ENCODE measurements at regions of chr14 and their contacts with region 1.

Region 1: DNA sequence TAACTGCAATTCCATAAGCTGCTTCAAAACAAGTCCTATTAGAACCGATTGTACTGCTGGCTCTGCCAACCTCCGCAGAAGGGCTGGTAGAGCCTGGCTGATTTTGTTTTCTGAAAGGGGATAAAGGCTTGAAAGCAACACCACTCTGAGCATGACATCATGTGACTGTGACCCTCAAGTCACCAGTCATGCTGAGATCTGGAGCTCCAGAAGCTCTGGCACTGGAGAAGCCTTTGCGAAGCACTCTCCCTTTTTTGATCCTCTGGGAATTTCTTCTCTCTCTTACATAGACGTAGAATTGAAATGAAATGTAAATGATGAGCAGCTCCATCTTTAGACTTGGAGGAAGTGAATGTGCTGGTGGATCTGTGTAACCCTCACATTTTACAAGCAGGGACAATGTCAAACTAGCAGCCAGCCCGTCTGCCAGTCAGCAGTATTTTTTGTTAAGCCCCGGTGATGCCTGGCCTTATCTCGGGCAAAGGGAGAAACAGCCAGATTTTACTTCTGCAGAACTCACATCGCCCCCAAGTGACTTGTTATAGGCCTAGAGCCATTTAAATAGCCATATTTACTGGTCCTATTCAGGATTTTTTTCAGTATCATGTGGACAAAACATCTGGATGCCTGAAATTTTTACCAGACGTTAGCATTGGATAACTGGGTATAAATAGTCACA is 112.1 kb upstream of the NPAS3 start:
- DNase-seq: peak; percentile 12 to 87 (median 62)

Region 2: GRCh38 chr14:32576088-32576795 is 250.3 kb before region 1 on chr14:
- intact Hi-C with region 1: loop called (anchors 10 kb)
- DNase-seq: peak; percentile 19 to 89 (median 64)

Region 3: DNA sequence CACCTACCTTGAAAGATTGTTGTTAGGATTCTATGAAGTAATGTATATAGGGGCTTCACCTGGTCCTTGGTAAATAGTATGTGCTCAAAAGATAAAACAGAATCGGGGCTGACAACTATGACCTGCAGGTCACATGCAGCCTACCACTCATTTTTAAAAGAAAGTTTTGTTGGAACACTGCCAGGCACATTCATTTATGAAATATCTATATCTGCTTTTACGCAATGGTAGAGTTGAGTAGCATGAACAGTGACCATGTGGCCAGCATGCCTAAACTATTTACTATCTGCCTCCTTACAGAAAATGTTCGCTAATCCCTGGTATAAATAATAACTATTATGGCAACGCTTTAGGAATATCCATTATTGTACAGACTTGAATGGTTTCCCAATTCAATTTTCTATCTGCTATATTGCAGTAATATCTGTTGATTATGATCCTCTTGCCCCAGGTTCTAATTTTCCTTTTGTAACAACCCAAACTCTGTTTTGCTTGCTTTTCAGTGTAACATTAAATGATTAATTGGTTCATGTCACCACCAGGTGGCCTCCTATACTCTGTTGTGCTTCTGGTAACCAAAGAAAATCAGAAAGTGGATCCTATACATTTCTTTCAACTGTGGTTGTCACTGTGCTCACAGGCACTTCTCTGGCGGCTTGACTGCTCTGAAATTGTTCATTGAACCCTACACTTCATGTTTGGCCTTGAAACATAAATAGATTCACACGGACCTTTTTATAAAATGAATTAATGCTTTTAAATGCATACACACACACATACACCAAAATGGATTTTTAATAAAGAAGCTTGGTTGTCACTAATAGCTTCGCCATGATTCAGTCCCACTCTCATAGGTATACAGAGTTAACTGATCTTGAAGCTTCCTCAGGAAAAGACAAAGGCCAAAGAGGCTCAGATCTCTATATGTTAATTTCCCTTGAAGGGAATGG is 115.5 kb before region 1 on chr14:
- intact Hi-C with region 1: loop called (anchors 5 kb)
- DNase-seq: peak in 30 of 42 donors; percentile 11 to 87 (median 57)

Region 4: GRCh38 chr14:32934073-32934890 is 107.7 kb after region 1 on chr14:
- intact Hi-C with region 1: loop called (anchors 5 kb)
- DNase-seq: peak; percentile 41 to 88 (median 73)

Measured in head of caudate nucleus (tissue), 42 donors.